ENCODE measurements at regions of chr3 and their contacts with region 1.

Region 1: DNA sequence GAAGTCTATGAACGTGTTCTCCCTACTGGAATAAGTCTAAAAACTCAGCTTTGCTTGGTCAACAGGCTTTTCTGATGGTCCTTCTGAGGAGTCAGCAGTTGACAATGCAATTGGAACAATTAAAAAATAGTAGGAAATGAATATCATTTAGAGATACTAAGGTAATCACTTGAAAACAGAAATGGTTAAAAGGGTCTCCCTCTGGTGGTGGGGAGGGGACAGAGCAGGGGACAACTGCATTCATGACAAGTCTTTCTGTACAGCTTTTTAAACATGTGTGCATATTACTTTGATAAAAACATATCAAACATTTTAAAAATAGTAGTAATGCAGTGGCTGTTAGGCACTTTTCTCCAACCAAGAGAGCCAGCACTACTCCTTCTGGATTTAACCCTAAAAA is 119.9 kb upstream of the FHIT start:
- DNase-seq: no peak
- H3K4me3 ChIP-seq: no peak overlapping the region
- H3K27ac ChIP-seq: no peak overlapping the region
- H3K4me1 ChIP-seq: no peaks in the 10 kb centered on the region
- H3K27me3 ChIP-seq: no peaks in the 10 kb centered on the region
- CTCF ChIP-seq: peak; percentile 59

Region 2: DNA sequence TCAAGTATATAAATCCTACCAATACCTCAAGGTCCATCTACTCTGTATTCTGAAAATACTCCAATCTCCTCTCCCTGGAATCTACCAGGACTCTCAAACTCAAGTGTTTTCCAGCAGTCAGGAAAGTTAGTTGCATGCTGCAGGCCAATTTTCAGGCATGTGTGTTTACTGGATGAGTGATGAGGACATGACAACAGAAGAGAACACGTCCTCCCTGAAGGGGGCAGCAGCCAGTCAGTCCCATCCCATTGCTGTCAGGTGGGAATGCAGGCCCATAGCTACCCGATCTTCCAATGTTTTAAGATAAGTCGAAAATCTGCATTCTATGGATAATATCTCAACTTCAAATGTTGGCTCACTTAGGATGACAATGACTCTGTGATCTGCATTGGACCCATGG is 616.0 kb before region 1 on chr3:
- CTCF ChIA-PET with region 1: no interaction called
- POLR2A ChIA-PET with region 1: no interaction called
- intact Hi-C with region 1: loop called (anchors 5 kb)
- DNase-seq: no peak
- H3K4me3 ChIP-seq: no peak overlapping the region
- H3K27ac ChIP-seq: no peak overlapping the region
- H3K4me1 ChIP-seq: no peaks in the 10 kb centered on the region
- H3K27me3 ChIP-seq: no peaks in the 10 kb centered on the region
- CTCF ChIP-seq: no peak

Measured in PC-9 (cell line).